ENCODE measurements at regions of chr11 and their contacts with region 1.

Region 1: GRCh38 chr11:31509429-31510345 is at the starts of genes ELP4 and IMMP1L:
- DNase-seq: peak; percentile 96
- ATAC-seq: peak; percentile 100
- total RNA-seq, gene ELP4: 12.6 to 15.3 TPM
- total RNA-seq, gene IMMP1L: 19.3 to 27.7 TPM

Region 2: DNA sequence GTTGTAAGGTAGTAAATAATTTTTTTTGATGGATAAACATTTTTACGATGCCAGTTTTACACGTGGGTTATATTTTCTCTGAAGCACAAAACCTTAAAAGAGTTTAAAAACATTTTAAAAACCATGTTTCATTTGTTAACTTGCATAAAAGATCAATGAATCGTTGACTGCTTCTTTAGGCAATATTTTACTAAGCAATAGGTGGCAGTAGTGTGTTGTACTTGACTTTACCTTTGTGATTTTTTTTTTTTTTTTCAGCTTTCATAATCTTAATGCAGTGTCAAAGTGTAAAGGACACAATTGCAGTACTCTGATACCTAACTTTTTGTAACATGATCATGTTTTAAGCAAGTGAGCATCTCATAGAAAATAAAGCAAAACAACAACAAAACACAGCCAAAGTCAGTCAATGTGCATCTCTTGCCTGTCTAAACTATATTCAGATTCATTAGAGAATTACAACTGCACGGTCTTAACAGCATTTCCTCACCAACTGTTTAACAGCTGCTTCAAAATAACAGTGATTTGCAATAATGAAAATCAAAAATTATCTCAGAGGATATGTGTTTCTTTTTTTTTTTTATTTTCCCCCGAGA is 112.3 kb before region 1 on chr11:
- intact Hi-C with region 1: loop called in 1 of 2 experiments (anchors 10 kb)
- DNase-seq: no peak
- ATAC-seq: no peak